ENCODE measurements at regions of chr17 and their contacts with region 1.

Region 1: DNA sequence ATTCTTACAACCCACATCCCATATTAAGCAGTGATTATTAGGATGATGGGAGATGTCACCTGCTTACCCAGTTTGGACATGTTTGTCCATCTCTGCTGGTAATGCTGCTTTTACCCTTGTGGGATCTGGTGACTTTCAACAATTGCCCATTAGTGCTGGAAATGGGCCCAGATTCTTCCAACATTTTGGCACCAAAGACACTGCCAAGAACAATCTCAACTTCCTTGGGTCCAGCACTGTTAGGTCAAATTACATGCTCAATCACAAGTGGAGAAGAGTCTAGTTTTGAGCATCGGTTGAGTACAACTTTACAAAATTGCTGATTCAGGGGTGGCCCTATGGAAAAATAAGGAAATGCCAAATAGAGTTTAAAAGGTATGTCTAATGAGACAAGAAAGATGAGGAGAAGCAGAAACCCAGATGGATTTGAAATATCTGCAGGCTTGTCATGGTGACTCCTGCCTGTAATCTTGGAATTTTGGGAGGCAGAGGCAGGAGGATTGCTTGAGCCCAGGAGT is 13.0 kb upstream of the ZFP3 start:
- DNase-seq: no peak
- H3K4me3 ChIP-seq: no peak overlapping the region
- H3K27ac ChIP-seq: no peak overlapping the region
- H3K4me1 ChIP-seq: no peaks in the 10 kb centered on the region
- H3K27me3 ChIP-seq: no peaks in the 10 kb centered on the region; the same call in 1 of the 2 replicates
- CTCF ChIP-seq: no peak
- EP300 ChIP-seq: no peak
- RAD21 ChIP-seq: no peak

Region 2: GRCh38 chr17:4966844-4967538 is 98.3 kb before region 1 on chr17:
- CTCF ChIA-PET with region 1: interaction called, 11 read pairs
- POLR2A ChIA-PET with region 1: no interaction called
- DNase-seq: peak; percentile 94
- H3K4me3 ChIP-seq: peak overlapping the region; percentile 59 to 72
- H3K27ac ChIP-seq: peak overlapping the region; percentile 93 to 96
- H3K4me1 ChIP-seq: peaks cover 16 to 24% of the 10 kb centered on the region in 2 experiments; a peak in 3 of 4 replicates
- H3K27me3 ChIP-seq: no peaks in the 10 kb centered on the region
- CTCF ChIP-seq: no peak
- EP300 ChIP-seq: no peak
- RAD21 ChIP-seq: no peak

Region 3: DNA sequence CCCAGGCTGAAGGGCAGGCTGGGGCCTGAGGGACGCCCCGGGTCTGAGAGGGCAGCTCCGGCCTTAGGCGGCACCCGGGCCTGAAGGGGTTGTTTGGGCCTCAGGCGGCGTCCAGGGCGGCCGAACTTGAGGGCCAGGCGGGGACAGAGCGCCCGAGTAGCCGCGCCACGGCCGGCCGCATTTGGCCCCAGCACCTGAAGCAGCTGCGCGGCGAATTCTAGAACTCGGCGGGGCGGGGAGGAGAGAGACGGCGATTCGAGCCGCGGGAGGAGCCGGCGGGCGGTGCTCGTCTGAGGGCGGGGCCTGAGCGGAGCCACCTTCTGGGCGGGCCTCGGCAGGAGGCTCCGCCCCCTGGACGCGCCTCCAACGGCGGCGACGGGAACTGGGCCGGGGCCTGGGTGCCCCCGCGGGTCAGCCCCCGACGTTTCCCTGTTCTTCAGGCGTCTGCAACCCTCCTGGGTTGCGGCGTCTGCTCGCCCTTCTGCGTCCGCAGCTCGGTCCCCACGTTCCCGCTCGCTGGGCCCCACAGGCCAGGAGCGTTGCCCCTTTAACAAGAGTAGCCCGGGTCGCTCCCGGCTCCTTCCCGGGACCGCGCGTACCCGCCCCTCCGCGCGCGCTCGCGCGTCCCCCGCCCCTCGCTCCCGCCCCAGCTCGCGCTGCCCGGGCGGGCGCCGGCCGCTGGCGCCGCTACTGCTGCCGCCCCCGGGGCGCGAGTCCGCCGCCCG is 67.8 kb before region 1 on chr17 and contains the starts of genes INCA1 and KIF1C:
- CTCF ChIA-PET with region 1: interaction called, 14 read pairs
- POLR2A ChIA-PET with region 1: no interaction called
- DNase-seq: peak; percentile 99
- H3K4me3 ChIP-seq: peak within 1 kb of the TSS; percentile 93 to 99
- H3K27ac ChIP-seq: peak within 1 kb of the TSS; percentile 66 to 85; a peak in 3 of 4 replicates
- H3K4me1 ChIP-seq: peaks cover 10 to 24% of the 10 kb centered on the region in 2 experiments; a peak in 3 of 4 replicates
- H3K27me3 ChIP-seq: no peaks in the 10 kb centered on the region
- CTCF ChIP-seq: no peak
- EP300 ChIP-seq: no peak
- RAD21 ChIP-seq: no peak
- polyA plus RNA-seq, gene INCA1: 1.2 and 1.3 TPM in 2 replicates
- polyA plus RNA-seq, gene KIF1C: 36.7 and 58.2 TPM in 2 replicates

Region 4: GRCh38 chr17:5011928-5012327 is 53.4 kb before region 1 on chr17:
- CTCF ChIA-PET with region 1: interaction called, 11 read pairs
- POLR2A ChIA-PET with region 1: no interaction called
- DNase-seq: no peak
- H3K4me3 ChIP-seq: no peak overlapping the region
- H3K27ac ChIP-seq: no peak overlapping the region
- H3K4me1 ChIP-seq: no peaks in the 10 kb centered on the region
- H3K27me3 ChIP-seq: no peaks in the 10 kb centered on the region
- CTCF ChIP-seq: no peak
- EP300 ChIP-seq: no peak
- RAD21 ChIP-seq: no peak

Region 5: GRCh38 chr17:5031365-5032082 is 33.8 kb before region 1 on chr17:
- CTCF ChIA-PET with region 1: interaction called, 39 read pairs
- POLR2A ChIA-PET with region 1: no interaction called
- DNase-seq: peak; percentile 95
- H3K4me3 ChIP-seq: peak overlapping the region; percentile 34 to 55; a peak in 3 of 4 replicates
- H3K27ac ChIP-seq: peak overlapping the region in 1 of 2 experiments; percentile 11; a peak in 1 of 4 replicates
- H3K4me1 ChIP-seq: peaks cover 0 to 2% of the 10 kb centered on the region in 2 experiments; a peak in 1 of 4 replicates
- H3K27me3 ChIP-seq: no peaks in the 10 kb centered on the region
- CTCF ChIP-seq: peak; percentile 66
- EP300 ChIP-seq: no peak
- RAD21 ChIP-seq: peak; percentile 43

Region 6: DNA sequence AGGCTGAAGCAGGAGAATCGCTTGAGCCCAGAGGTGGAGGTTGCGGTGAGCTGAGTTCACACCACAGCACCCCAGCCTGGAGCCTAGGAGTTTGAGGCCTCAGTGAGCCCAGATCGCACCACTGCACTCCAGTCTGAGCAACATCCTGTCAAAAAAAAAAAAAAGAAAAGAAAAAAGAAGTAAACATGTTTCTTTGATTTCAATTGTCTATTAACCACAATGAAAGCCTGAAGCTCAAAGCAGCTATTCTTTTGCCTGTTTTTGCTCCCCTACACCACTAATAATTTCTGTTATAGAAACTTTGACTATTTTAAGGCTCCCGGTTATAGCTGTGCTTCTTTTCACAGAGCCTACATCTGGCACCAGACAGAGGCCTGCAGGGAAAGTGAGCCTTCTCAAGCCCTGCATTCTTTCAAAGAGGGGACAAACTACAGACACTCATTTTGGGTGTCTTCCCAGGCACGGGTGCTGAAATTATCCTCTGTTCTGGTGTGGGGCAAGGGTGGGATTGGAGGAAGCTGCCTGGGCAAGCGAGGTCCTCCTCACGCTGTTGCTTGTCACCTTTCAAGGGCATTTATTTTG is 15.9 kb before region 1 on chr17:
- CTCF ChIA-PET with region 1: interaction called, 13 read pairs
- POLR2A ChIA-PET with region 1: no interaction called
- DNase-seq: no peak
- H3K4me3 ChIP-seq: no peak overlapping the region
- H3K27ac ChIP-seq: peak overlapping the region in 1 of 2 experiments; percentile 12; a peak in 1 of 4 replicates
- H3K4me1 ChIP-seq: peaks cover 0 to 2% of the 10 kb centered on the region in 2 experiments; a peak in 1 of 4 replicates
- H3K27me3 ChIP-seq: no peaks in the 10 kb centered on the region
- CTCF ChIP-seq: no peak
- EP300 ChIP-seq: no peak
- RAD21 ChIP-seq: no peak

Region 7: GRCh38 chr17:5077781-5078105 is 12.5 kb after region 1 on chr17:
- CTCF ChIA-PET with region 1: interaction called, 14 read pairs
- POLR2A ChIA-PET with region 1: no interaction called
- DNase-seq: no peak
- H3K4me3 ChIP-seq: peak overlapping the region; percentile 64 to 69
- H3K27ac ChIP-seq: peak overlapping the region in 1 of 2 experiments; percentile 64; a peak in 2 of 4 replicates
- H3K4me1 ChIP-seq: peaks cover 0 to 9% of the 10 kb centered on the region in 2 experiments; a peak in 1 of 4 replicates
- H3K27me3 ChIP-seq: no peaks in the 10 kb centered on the region
- CTCF ChIP-seq: no peak
- EP300 ChIP-seq: no peak
- RAD21 ChIP-seq: no peak

Region 8: GRCh38 chr17:5131146-5131715 is 65.9 kb after region 1 on chr17:
- CTCF ChIA-PET with region 1: no interaction called
- POLR2A ChIA-PET with region 1: no interaction called
- DNase-seq: no peak
- H3K4me3 ChIP-seq: no peak overlapping the region
- H3K27ac ChIP-seq: no peak overlapping the region
- H3K4me1 ChIP-seq: no peaks in the 10 kb centered on the region
- H3K27me3 ChIP-seq: peaks cover 3% of the 10 kb centered on the region; the same call in 1 of the 2 replicates
- CTCF ChIP-seq: no peak
- EP300 ChIP-seq: no peak
- RAD21 ChIP-seq: no peak

Region 9: GRCh38 chr17:6126768-6127167 is 1061.5 kb after region 1 on chr17:
- CTCF ChIA-PET with region 1: no interaction called
- POLR2A ChIA-PET with region 1: no interaction called
- DNase-seq: no peak
- H3K4me3 ChIP-seq: no peak overlapping the region
- H3K27ac ChIP-seq: no peak overlapping the region
- H3K4me1 ChIP-seq: no peaks in the 10 kb centered on the region
- H3K27me3 ChIP-seq: no peaks in the 10 kb centered on the region; the same call in 1 of the 2 replicates
- CTCF ChIP-seq: no peak
- EP300 ChIP-seq: no peak
- RAD21 ChIP-seq: no peak

Measured in SK-N-SH (cell line).